Colonic mucosa (tissue), 4 donors: ENCODE measurements at regions of chr10 and their contacts with region 1.

Region 1: DNA sequence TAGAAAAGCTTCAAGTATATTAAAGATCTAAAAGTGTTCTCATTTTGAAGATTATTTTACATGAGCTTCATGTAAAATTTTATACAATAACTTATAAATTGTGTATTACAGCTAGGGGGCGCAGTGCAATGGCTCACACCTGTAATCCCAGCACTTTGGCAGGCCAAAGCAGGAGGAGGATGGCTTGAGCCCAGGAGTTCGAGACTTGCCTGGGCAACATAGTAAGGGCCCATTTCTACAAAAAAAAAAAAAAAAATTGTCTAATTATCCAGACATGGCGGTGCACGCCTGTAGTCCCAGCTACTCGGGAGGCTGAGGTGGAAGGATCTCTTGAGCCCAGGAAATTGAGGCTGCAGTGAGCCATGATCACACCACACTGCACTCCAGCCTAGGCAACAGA is 16.6 kb downstream of the ACBD5 start:
- DNase-seq: peak; percentile 42
- H3K4me3 ChIP-seq: no peak overlapping the region
- H3K27ac ChIP-seq: no peak overlapping the region
- H3K4me1 ChIP-seq: no peaks in the 10 kb centered on the region
- H3K27me3 ChIP-seq: no peaks in the 10 kb centered on the region
- CTCF ChIP-seq: peak; percentile 51

Region 2: GRCh38 chr10:27134371-27134770 is 89.6 kb before region 1 on chr10:
- intact Hi-C with region 1: loop called (anchors 10 kb)
- DNase-seq: no peak
- H3K4me3 ChIP-seq: no peak overlapping the region
- H3K27ac ChIP-seq: no peak overlapping the region
- H3K4me1 ChIP-seq: no peaks in the 10 kb centered on the region
- H3K27me3 ChIP-seq: no peaks in the 10 kb centered on the region
- CTCF ChIP-seq: no peak

Region 3: DNA sequence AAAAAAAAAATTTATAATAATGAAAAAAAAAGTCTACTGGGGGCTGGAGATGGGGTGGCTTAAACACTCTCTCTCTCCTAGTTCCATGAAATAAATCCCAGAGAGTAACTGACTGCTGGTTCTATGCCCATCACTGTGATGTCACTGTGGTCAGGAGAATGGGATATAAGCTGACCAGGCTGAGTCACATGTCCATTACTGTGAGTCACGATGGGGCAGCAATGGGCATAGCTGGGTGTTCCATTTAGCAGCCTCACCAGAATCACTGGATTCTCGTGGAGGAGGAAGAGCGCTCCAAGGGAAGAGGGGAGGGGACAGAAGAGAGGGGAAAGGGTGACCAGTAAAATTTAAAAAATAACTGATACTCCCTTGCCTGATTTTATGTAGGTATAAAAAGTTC is 31.7 kb before region 1 on chr10:
- intact Hi-C with region 1: no loop called
- DNase-seq: no peak
- H3K4me3 ChIP-seq: no peak overlapping the region
- H3K27ac ChIP-seq: no peak overlapping the region
- H3K4me1 ChIP-seq: no peaks in the 10 kb centered on the region
- H3K27me3 ChIP-seq: no peaks in the 10 kb centered on the region
- CTCF ChIP-seq: no peak

Region 4: GRCh38 chr10:27285108-27285507 is 61.1 kb after region 1 on chr10:
- intact Hi-C with region 1: loop called (anchors 10 kb)
- DNase-seq: no peak
- H3K4me3 ChIP-seq: no peak overlapping the region
- H3K27ac ChIP-seq: no peak overlapping the region
- H3K4me1 ChIP-seq: no peaks in the 10 kb centered on the region
- H3K27me3 ChIP-seq: no peaks in the 10 kb centered on the region
- CTCF ChIP-seq: peak; percentile 24

Region 5: DNA sequence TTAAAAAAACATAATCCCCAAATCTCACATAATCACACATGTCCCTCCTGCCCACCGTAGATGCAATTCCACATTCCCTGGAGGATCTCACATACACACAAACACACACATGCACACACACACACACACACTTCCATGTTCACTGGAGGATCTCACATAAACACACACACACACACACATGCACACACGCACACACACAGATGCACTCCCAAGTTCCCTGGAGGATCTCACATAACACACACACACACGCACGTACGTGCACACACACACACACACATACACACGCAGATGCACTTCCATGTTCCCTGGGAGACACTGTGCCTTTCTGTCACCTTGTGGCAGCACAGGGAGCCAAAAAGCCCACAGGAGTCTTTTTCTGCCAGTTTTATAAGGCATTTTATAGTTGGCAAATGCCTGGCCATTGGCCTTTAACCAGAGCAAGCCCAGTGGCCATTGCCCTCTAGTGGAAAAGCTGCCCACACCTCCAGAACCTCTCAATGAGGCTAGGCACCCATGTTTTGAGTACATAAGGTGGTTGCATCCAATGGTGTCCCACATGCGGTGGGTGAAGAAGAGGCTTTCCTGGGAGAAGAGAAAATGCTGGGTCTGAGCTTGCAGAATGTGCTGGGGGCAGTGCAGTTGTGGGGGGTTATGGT is 132.1 kb after region 1 on chr10:
- intact Hi-C with region 1: loop called (anchors 10 kb)
- DNase-seq: no peak
- H3K4me3 ChIP-seq: no peak overlapping the region
- H3K27ac ChIP-seq: no peak overlapping the region
- H3K4me1 ChIP-seq: no peaks in the 10 kb centered on the region
- H3K27me3 ChIP-seq: no peaks in the 10 kb centered on the region
- CTCF ChIP-seq: no peak

Region 6: DNA sequence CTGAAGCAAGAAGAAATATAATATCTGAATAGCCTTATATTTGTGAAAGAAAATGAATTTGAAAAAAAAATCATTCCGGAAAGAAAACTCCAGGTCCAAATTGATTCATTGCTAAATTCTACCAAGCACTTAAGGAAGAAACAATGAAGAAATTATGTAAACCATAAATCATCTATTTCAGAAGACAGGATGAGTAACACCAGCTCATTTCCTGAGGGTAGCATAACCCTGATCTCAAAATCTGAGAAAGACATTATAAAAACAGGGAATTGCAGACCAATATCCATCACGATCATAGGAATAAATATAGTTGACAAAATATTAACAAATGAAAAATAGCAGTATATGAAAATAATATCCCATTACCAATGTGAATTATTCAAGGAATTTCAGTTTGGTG is 210.0 kb after region 1 on chr10:
- intact Hi-C with region 1: no loop called
- DNase-seq: no peak
- H3K4me3 ChIP-seq: no peak overlapping the region
- H3K27ac ChIP-seq: no peak overlapping the region
- H3K4me1 ChIP-seq: no peaks in the 10 kb centered on the region
- H3K27me3 ChIP-seq: no peaks in the 10 kb centered on the region
- CTCF ChIP-seq: no peak